Heart left ventricle (tissue), 16 donors: ENCODE measurements at regions of chr5 and their contacts with region 1.

Region 1: DNA sequence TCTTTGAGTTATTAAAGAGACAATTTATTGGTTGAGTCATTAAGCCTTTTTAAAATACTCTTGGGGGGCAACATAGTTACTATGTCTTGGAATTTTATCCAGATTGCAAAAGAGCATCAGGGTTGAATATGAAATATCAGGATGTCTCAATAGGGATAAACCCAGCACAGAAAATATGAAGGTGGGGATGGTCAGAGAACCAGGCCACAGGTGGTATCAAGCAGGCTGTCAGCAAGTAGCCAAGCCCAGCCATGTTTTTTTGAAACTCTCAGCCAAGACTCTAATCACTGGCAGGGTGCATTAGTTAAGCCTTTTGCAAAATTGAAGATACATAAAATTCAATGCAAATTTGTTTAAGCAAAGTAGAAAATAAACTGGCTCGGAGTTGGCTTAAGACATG is 468.9 kb downstream of the DTWD2 start:
- DNase-seq: no peak
- ATAC-seq: no peak
- H3K4me3 ChIP-seq: no peak overlapping the region
- H3K27ac ChIP-seq: no peak overlapping the region
- H3K4me1 ChIP-seq: peaks cover 0 to 23% (median 0%) of the 10 kb centered on the region in 12 donors
- H3K27me3 ChIP-seq: no peaks in the 10 kb centered on the region
- CTCF ChIP-seq: no peak
- POLR2A ChIP-seq: no peak

Region 2: DNA sequence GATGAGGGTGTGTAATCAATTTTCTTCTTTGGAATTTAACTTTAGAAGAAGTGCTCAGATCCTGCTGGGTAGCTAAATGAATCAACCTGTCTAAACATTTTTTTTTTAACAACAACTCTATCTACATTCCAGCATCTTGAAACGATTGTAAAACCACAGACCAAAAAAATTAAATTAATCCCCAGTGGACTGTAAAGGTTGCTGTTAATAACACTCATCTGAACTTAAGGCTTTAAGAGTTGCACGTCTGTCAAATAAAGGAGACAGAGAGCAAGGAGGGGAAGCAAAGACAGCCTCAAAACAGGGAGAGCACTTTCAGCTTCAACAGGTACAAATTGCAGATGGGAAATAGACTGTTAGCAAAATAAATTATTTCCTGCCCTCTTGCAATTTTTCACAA is 79.6 kb before region 1 on chr5:
- intact Hi-C with region 1: loop called in 1 of 10 experiments (anchors 10 kb)
- DNase-seq: no peak
- ATAC-seq: no peak
- H3K4me3 ChIP-seq: no peak overlapping the region
- H3K27ac ChIP-seq: no peak overlapping the region
- H3K4me1 ChIP-seq: peaks cover 0 to 16% (median 0%) of the 10 kb centered on the region in 12 donors
- H3K27me3 ChIP-seq: no peaks in the 10 kb centered on the region
- CTCF ChIP-seq: no peak
- POLR2A ChIP-seq: no peak